ENCODE measurements at regions of chr5 and their contacts with region 1.

Region 1: GRCh38 chr5:126846344-126846743 is 69.4 kb downstream of the LMNB1 start:
- DNase-seq: no peak
- ATAC-seq: no peak
- H3K4me3 ChIP-seq: peak overlapping the region; percentile 27
- H3K4me3 Mint-ChIP-seq: peak overlapping the region in 7 of 10 donors; percentile 42 to 73 (median 59)
- H3K27ac ChIP-seq: peak overlapping the region; percentile 66
- H3K27ac Mint-ChIP-seq: peak overlapping the region; percentile 27 to 98 (median 94)
- H3K4me1 ChIP-seq: peaks cover 3 to 23% of the 10 kb centered on the region in 2 donors
- H3K4me1 Mint-ChIP-seq: peaks cover 18 to 61% (median 51%) of the 10 kb centered on the region in 7 donors
- H3K27me3 ChIP-seq: no peaks in the 10 kb centered on the region
- H3K27me3 Mint-ChIP-seq: no peaks in the 10 kb centered on the region

Region 2: DNA sequence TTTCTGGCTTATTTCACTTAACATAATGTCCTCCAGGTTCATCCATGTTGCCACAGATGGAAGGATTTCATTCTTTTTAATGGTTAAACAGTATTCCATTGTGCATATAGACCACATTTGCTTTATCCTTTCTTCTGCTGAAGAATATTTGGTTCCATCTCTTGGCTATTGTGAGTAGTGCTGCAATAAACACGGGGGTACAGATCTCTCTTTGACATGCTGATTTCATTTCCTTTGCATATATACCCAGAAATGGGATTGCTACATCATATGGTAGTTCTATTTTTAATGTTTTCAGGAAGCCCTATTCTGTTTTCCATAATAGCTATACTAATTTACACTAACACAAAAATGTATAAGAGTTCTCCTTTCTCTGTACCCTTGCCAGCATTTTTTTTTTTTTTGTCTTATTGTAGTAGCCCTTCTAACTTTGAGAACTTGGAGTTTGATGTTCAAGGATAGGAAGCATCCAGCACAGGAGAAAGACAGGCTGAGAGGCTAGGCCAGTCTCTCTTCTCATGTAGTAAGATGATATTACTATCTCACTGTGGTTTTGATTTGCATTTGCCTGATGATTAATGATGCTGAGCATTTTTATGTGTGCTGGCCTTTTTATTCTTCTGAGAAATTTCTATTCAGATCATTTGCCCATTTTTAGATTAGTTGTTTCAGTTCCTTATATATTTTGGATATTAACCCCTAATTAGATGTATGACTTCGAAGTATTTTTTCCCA is 1507.7 kb before region 1 on chr5:
- CTCF ChIA-PET with region 1: no interaction called
- POLR2A ChIA-PET with region 1: no interaction called
- intact Hi-C with region 1: no loop called
- DNase-seq: no peak
- ATAC-seq: no peak
- H3K4me3 ChIP-seq: no peak overlapping the region
- H3K4me3 Mint-ChIP-seq: no peak overlapping the region
- H3K27ac ChIP-seq: no peak overlapping the region
- H3K27ac Mint-ChIP-seq: no peak overlapping the region
- H3K4me1 ChIP-seq: no peaks in the 10 kb centered on the region
- H3K4me1 Mint-ChIP-seq: no peaks in the 10 kb centered on the region
- H3K27me3 ChIP-seq: no peaks in the 10 kb centered on the region
- H3K27me3 Mint-ChIP-seq: no peaks in the 10 kb centered on the region

Region 3: DNA sequence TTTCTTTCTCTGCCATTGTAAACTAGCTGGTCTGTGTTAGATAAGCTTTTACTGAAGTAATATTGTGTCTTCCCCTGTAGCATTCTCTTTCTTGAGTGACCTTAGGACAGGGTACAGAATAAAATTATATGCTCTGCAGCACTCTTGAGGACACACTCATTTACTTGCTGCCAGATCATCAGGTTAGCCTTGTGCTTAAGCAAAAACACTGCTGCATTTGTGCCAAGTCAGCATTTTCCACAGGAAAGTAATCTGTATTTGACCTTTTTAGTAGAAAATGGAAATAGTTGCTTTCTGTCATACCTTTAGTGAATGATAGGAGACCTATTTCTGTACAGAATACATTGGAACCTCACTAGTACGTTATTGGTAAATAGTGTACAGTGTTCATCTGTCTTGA is 15.2 kb before region 1 on chr5:
- CTCF ChIA-PET with region 1: no interaction called
- POLR2A ChIA-PET with region 1: interaction called, 23 read pairs
- intact Hi-C with region 1: loop called in 1 of 2 experiments (anchors 2 kb)
- DNase-seq: no peak
- ATAC-seq: no peak
- H3K4me3 ChIP-seq: no peak overlapping the region
- H3K4me3 Mint-ChIP-seq: no peak overlapping the region
- H3K27ac ChIP-seq: no peak overlapping the region
- H3K27ac Mint-ChIP-seq: peak overlapping the region in 1 of 9 donors; percentile 6
- H3K4me1 ChIP-seq: no peaks in the 10 kb centered on the region
- H3K4me1 Mint-ChIP-seq: peaks cover 0 to 12% (median 0%) of the 10 kb centered on the region in 7 donors
- H3K27me3 ChIP-seq: no peaks in the 10 kb centered on the region
- H3K27me3 Mint-ChIP-seq: no peaks in the 10 kb centered on the region

Region 4: GRCh38 chr5:127072861-127073846 is 226.8 kb after region 1 on chr5 and contains the start of gene C5orf63:
- CTCF ChIA-PET with region 1: no interaction called
- POLR2A ChIA-PET with region 1: interaction called, 5 read pairs
- intact Hi-C with region 1: loop called in 1 of 2 experiments (anchors 1 kb)
- DNase-seq: peak; percentile 41 to 78 (median 69)
- ATAC-seq: peak; percentile 91
- H3K4me3 ChIP-seq: peak within 1 kb of the TSS; percentile 83
- H3K4me3 Mint-ChIP-seq: peak within 1 kb of the TSS; percentile 89 to 100 (median 92)
- H3K27ac ChIP-seq: peak within 1 kb of the TSS; percentile 69
- H3K27ac Mint-ChIP-seq: peak within 1 kb of the TSS; percentile 74 to 98 (median 93)
- H3K4me1 ChIP-seq: peaks cover 8 to 10% of the 10 kb centered on the region in 2 donors
- H3K4me1 Mint-ChIP-seq: peaks cover 17 to 39% (median 29%) of the 10 kb centered on the region in 7 donors
- H3K27me3 ChIP-seq: no peaks in the 10 kb centered on the region
- H3K27me3 Mint-ChIP-seq: no peaks in the 10 kb centered on the region
- total RNA-seq, gene C5orf63: 9.2 to 20.7 (median 11.9) TPM

Measured in naive thymus-derived CD4-positive, alpha-beta T cell (primary cell).